Naive thymus-derived CD4-positive, alpha-beta T cell (primary cell): ENCODE measurements at regions of chr12 and their contacts with region 1.

Region 1: DNA sequence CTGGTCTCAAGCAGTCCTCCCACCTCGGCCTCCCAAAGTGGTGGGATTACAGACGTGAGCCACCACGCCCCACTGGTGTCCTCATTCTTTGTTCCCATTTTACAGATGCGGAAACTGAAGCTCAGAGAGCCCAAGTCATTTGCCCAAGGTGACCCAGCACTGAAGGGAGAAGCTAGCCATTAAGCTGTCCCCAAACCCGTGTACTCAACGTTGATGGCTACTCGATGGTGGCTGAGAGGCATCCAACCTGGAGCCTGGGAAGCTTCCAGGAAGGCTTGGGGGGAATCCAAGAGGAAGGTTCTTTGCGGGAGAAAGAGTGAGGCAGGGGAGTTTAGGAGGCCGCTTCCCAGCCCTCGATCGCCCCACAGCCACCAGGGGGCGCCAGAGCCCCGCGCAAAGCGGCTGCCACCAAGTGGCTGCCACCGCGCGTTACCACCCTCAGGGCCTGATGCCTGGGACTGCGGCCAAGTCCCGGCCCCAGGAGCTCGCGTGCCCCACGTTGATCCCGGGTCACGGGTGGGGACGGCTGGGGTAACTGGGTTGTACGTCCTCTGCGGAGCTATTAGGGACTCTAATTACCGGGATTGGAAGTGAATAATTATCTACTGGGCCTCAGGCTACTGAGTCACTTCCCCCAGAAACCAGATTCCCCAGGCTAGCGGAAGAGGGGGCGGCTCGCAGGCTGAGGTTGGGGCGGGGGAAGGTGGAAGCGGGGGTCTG is 8.8 kb upstream of the SH2B3 start:
- DNase-seq: peak; percentile 76 to 95 (median 86)
- ATAC-seq: peak; percentile 86
- H3K4me3 ChIP-seq: no peak overlapping the region
- H3K4me3 Mint-ChIP-seq: peak overlapping the region in 7 of 10 donors; percentile 32 to 67 (median 53)
- H3K27ac ChIP-seq: no peak overlapping the region
- H3K27ac Mint-ChIP-seq: peak overlapping the region in 6 of 9 donors; percentile 10 to 67 (median 43)
- H3K4me1 ChIP-seq: peaks cover 0 to 3% of the 10 kb centered on the region in 2 donors
- H3K4me1 Mint-ChIP-seq: peaks cover 0 to 26% (median 10%) of the 10 kb centered on the region in 7 donors
- H3K27me3 ChIP-seq: no peaks in the 10 kb centered on the region
- H3K27me3 Mint-ChIP-seq: no peaks in the 10 kb centered on the region

Region 2: GRCh38 chr12:111377440-111377839 is 19.4 kb before region 1 on chr12:
- CTCF ChIA-PET with region 1: no interaction called
- POLR2A ChIA-PET with region 1: no interaction called
- intact Hi-C with region 1: no loop called
- DNase-seq: no peak
- ATAC-seq: no peak
- H3K4me3 ChIP-seq: no peak overlapping the region
- H3K4me3 Mint-ChIP-seq: no peak overlapping the region
- H3K27ac ChIP-seq: no peak overlapping the region
- H3K27ac Mint-ChIP-seq: peak overlapping the region in 1 of 9 donors; percentile 29
- H3K4me1 ChIP-seq: no peaks in the 10 kb centered on the region
- H3K4me1 Mint-ChIP-seq: peaks cover 0 to 2% (median 0%) of the 10 kb centered on the region in 7 donors
- H3K27me3 ChIP-seq: no peaks in the 10 kb centered on the region
- H3K27me3 Mint-ChIP-seq: peaks cover 0 to 16% (median 0%) of the 10 kb centered on the region in 5 donors

Region 3: DNA sequence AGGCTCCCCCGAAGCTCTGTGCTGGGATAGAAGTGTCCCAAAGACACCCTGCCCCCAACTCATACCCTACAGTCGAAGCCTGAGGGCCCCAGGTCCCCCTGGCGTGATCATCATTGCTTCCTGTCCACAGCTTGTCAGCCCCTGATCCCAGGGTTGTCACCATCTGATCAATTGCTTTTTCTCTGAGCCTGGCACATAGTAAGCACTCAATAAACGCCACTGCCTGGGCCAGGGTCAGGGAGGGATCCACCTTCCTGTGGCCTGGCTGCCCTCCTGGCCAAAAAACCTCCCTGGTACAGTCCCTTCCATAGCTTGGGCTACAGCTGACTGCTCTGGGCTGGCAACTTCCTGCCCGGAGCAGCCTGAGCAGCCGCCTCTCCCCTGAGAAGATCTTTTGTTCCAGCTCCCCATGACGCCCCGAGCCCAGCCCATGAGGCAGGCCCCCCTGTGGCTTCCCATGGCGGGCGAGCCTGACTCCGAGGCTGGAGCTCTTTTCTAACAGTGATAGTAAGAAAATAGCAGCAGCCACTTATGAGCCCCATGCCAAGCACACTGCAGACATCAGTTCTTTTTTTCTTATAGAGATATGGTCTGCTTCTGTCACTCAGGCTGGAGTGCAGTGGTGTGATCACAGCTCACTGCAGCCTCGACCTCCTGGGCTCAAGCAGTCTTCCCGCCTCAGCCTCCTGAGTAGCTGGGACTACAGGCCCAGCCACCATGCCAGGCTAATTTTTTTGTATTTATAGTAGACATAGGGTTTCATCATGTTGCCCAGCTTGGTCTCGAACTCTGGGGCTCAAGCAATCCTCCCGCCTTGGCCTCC is 15.3 kb after region 1 on chr12:
- CTCF ChIA-PET with region 1: interaction called, 17 read pairs
- POLR2A ChIA-PET with region 1: interaction called, 5 read pairs
- intact Hi-C with region 1: no loop called
- DNase-seq: peak in 3 of 9 donors; percentile 40 to 47 (median 41)
- ATAC-seq: peak; percentile 59
- H3K4me3 ChIP-seq: no peak overlapping the region
- H3K4me3 Mint-ChIP-seq: peak overlapping the region; percentile 61 to 96 (median 77)
- H3K27ac ChIP-seq: peak overlapping the region; percentile 97
- H3K27ac Mint-ChIP-seq: peak overlapping the region; percentile 79 to 99 (median 88)
- H3K4me1 ChIP-seq: peaks cover 65 to 79% of the 10 kb centered on the region in 2 donors
- H3K4me1 Mint-ChIP-seq: peaks cover 45 to 91% (median 80%) of the 10 kb centered on the region in 7 donors
- H3K27me3 ChIP-seq: no peaks in the 10 kb centered on the region
- H3K27me3 Mint-ChIP-seq: no peaks in the 10 kb centered on the region

Region 4: GRCh38 chr12:111451649-111452129 is 54.8 kb after region 1 on chr12:
- CTCF ChIA-PET with region 1: interaction called, 462 read pairs
- POLR2A ChIA-PET with region 1: interaction called, 64 read pairs
- intact Hi-C with region 1: loop called (anchors 1 kb)
- DNase-seq: peak in 7 of 9 donors; percentile 48 to 78 (median 73)
- ATAC-seq: peak; percentile 77
- H3K4me3 ChIP-seq: no peak overlapping the region
- H3K4me3 Mint-ChIP-seq: peak overlapping the region in 1 of 10 donors; percentile 13
- H3K27ac ChIP-seq: peak overlapping the region; percentile 12
- H3K27ac Mint-ChIP-seq: peak overlapping the region in 8 of 9 donors; percentile 0 to 81 (median 25)
- H3K4me1 ChIP-seq: peaks cover 6 to 17% of the 10 kb centered on the region in 2 donors
- H3K4me1 Mint-ChIP-seq: peaks cover 12 to 50% (median 29%) of the 10 kb centered on the region in 7 donors
- H3K27me3 ChIP-seq: no peaks in the 10 kb centered on the region
- H3K27me3 Mint-ChIP-seq: no peaks in the 10 kb centered on the region

Region 5: DNA sequence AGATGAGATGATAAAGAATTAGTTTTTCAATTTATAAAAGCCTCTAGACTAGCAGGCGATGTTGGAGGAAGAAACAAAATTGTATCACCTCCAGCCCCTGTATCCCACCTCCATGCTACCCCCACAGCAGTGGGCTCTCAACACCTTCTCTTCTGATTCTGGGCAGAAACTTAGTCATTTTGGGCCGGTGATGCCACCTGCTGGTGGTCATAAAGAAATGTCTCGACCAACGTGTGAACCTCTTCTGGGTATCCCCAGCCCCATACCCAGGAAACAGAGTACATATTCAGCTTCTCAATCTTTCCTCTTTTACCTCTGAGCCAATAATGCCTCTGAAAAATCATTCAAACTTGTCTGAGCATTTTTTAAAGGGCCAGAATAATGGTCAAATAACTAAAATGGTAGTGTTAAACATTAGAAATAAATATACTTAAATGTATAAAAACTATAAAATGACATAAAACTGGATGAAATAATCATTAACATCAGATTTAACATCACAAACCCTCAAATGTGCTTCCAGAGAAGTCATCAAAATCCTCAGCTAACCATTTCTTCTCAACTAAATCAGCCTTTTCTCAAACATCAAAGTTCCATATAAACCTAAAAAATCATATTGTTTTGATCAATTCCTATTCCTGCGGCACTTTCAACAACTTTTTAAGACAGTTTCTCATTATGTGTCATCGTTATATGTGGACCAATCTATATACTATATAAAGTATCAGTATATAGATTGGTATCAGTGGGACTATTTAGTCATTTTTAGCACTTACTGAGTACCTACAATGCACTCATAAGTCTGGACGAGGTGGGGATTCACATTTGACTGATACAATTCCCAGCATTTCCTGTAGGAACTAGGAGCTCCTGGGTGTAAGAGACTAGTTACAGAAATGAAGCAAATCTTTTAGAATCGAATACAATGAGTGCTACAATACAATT is 132.8 kb after region 1 on chr12:
- CTCF ChIA-PET with region 1: interaction called, 20 read pairs
- POLR2A ChIA-PET with region 1: no interaction called
- intact Hi-C with region 1: loop called (anchors 1 kb)
- DNase-seq: peak; percentile 25 to 65 (median 57)
- ATAC-seq: peak; percentile 85
- H3K4me3 ChIP-seq: no peak overlapping the region
- H3K4me3 Mint-ChIP-seq: no peak overlapping the region
- H3K27ac ChIP-seq: no peak overlapping the region
- H3K27ac Mint-ChIP-seq: peak overlapping the region in 2 of 9 donors; percentile 10 to 56
- H3K4me1 ChIP-seq: no peaks in the 10 kb centered on the region
- H3K4me1 Mint-ChIP-seq: peaks cover 0 to 9% (median 6%) of the 10 kb centered on the region in 7 donors
- H3K27me3 ChIP-seq: no peaks in the 10 kb centered on the region
- H3K27me3 Mint-ChIP-seq: no peaks in the 10 kb centered on the region

Region 6: DNA sequence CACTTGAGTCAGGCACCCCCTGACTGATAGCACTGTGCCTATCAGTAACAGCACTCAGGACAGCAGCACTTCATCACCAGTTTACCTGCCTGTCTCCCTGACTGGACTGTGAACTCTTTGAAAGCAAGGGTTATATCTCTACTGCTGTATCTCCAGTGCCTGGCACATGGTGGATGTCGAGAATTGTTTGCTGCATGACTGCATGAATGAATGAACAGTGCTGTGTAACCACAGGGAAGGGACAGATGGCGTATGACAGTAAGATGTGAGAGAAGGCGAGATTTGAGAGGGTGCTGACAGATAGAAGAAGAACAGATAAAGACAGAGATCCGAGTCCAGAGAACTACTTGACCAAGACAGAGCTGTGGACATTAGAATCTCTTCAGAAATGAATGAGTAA is 259.1 kb after region 1 on chr12:
- CTCF ChIA-PET with region 1: no interaction called
- POLR2A ChIA-PET with region 1: no interaction called
- intact Hi-C with region 1: no loop called
- DNase-seq: no peak
- ATAC-seq: no peak
- H3K4me3 ChIP-seq: no peak overlapping the region
- H3K4me3 Mint-ChIP-seq: no peak overlapping the region
- H3K27ac ChIP-seq: no peak overlapping the region
- H3K27ac Mint-ChIP-seq: peak overlapping the region in 2 of 9 donors; percentile 7 to 51
- H3K4me1 ChIP-seq: no peaks in the 10 kb centered on the region
- H3K4me1 Mint-ChIP-seq: peaks cover 0 to 5% (median 0%) of the 10 kb centered on the region in 7 donors
- H3K27me3 ChIP-seq: no peaks in the 10 kb centered on the region
- H3K27me3 Mint-ChIP-seq: no peaks in the 10 kb centered on the region

Region 7: GRCh38 chr12:111812881-111813741 is 416.2 kb after region 1 on chr12:
- CTCF ChIA-PET with region 1: no interaction called
- POLR2A ChIA-PET with region 1: no interaction called
- intact Hi-C with region 1: loop called in 1 of 2 experiments (anchors 1 kb)
- DNase-seq: peak; percentile 37 to 67 (median 57)
- ATAC-seq: peak; percentile 99
- H3K4me3 ChIP-seq: no peak overlapping the region
- H3K4me3 Mint-ChIP-seq: peak overlapping the region in 4 of 10 donors; percentile 5 to 39 (median 34)
- H3K27ac ChIP-seq: no peak overlapping the region
- H3K27ac Mint-ChIP-seq: peak overlapping the region in 2 of 9 donors; percentile 5 to 52
- H3K4me1 ChIP-seq: peaks cover 0 to 8% of the 10 kb centered on the region in 2 donors
- H3K4me1 Mint-ChIP-seq: peaks cover 5 to 11% (median 8%) of the 10 kb centered on the region in 7 donors
- H3K27me3 ChIP-seq: no peaks in the 10 kb centered on the region
- H3K27me3 Mint-ChIP-seq: peaks cover 0 to 12% (median 5%) of the 10 kb centered on the region in 5 donors

Region 8: DNA sequence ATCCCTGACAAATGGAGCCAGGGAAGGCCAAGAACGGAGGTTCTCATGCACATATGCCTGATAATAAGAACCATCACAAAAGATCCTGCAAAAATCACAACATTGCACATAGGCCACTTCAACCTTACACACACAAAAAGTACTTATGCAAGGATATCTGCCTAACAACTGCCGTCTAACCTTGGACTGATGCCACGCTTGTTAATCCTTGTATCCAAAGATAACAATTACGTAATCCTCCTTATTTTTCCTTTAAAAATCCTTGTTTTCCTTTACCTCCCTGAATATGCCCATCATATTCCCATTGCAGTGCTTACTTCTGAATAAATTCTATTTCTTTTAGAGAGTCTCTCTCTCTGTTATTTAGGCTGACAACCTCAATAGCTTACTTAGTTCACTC is 556.6 kb after region 1 on chr12:
- CTCF ChIA-PET with region 1: no interaction called
- POLR2A ChIA-PET with region 1: no interaction called
- intact Hi-C with region 1: no loop called
- DNase-seq: no peak
- ATAC-seq: no peak
- H3K4me3 ChIP-seq: no peak overlapping the region
- H3K4me3 Mint-ChIP-seq: no peak overlapping the region
- H3K27ac ChIP-seq: no peak overlapping the region
- H3K27ac Mint-ChIP-seq: peak overlapping the region in 4 of 9 donors; percentile 16 to 68 (median 26)
- H3K4me1 ChIP-seq: peaks cover 11 to 13% of the 10 kb centered on the region in 2 donors
- H3K4me1 Mint-ChIP-seq: peaks cover 15 to 46% (median 33%) of the 10 kb centered on the region in 7 donors
- H3K27me3 ChIP-seq: no peaks in the 10 kb centered on the region
- H3K27me3 Mint-ChIP-seq: no peaks in the 10 kb centered on the region